ENCODE measurements at regions of chr2 and their contacts with region 1.

Region 1: GRCh38 chr2:54520687-54521086 is 64.6 kb downstream of the SPTBN1 start:
- DNase-seq: no peak
- ATAC-seq: peak; percentile 78
- H3K4me3 ChIP-seq: no peak overlapping the region
- H3K27ac ChIP-seq: peak overlapping the region; percentile 19; the same call in 1 of the 2 replicates
- H3K4me1 ChIP-seq: peaks cover 16% of the 10 kb centered on the region
- H3K27me3 ChIP-seq: no peaks in the 10 kb centered on the region
- CTCF ChIP-seq: no peak

Region 2: GRCh38 chr2:53933329-53933728 is 587.4 kb before region 1 on chr2:
- CTCF ChIA-PET with region 1: no interaction called
- POLR2A ChIA-PET with region 1: interaction called, 12 read pairs
- in situ Hi-C with region 1: no loop called
- intact Hi-C with region 1: no loop called
- DNase-seq: no peak
- ATAC-seq: no peak
- H3K4me3 ChIP-seq: no peak overlapping the region
- H3K27ac ChIP-seq: no peak overlapping the region
- H3K4me1 ChIP-seq: no peaks in the 10 kb centered on the region
- H3K27me3 ChIP-seq: no peaks in the 10 kb centered on the region
- CTCF ChIP-seq: no peak

Region 3: GRCh38 chr2:54497763-54498680 is 22.7 kb before region 1 on chr2:
- CTCF ChIA-PET with region 1: no interaction called
- POLR2A ChIA-PET with region 1: no interaction called
- in situ Hi-C with region 1: no loop called
- intact Hi-C with region 1: no loop called
- DNase-seq: no peak
- ATAC-seq: peak; percentile 82
- H3K4me3 ChIP-seq: no peak overlapping the region
- H3K27ac ChIP-seq: no peak overlapping the region
- H3K4me1 ChIP-seq: no peaks in the 10 kb centered on the region
- H3K27me3 ChIP-seq: no peaks in the 10 kb centered on the region
- CTCF ChIP-seq: peak; percentile 52